ENCODE measurements at regions of chr7 and their contacts with region 1.

Region 1: GRCh38 chr7:116979430-116979829 is 26.1 kb downstream of the ST7 start:
- DNase-seq: no peak
- H3K4me3 ChIP-seq: no peak overlapping the region
- H3K27ac ChIP-seq: no peak overlapping the region
- H3K4me1 ChIP-seq: no peaks in the 10 kb centered on the region
- H3K27me3 ChIP-seq: no peaks in the 10 kb centered on the region
- CTCF ChIP-seq: no peak

Region 2: GRCh38 chr7:116122972-116123595 is 856.3 kb before region 1 on chr7:
- CTCF ChIA-PET with region 1: no interaction called
- dilution Hi-C with region 1: no loop called
- in situ Hi-C with region 1: no loop called
- intact Hi-C with region 1: no loop called
- DNase-seq: peak; percentile 24
- H3K4me3 ChIP-seq: no peak overlapping the region
- H3K27ac ChIP-seq: no peak overlapping the region
- H3K4me1 ChIP-seq: no peaks in the 10 kb centered on the region
- H3K27me3 ChIP-seq: no peaks in the 10 kb centered on the region
- CTCF ChIP-seq: peak; percentile 80 to 85

Region 3: DNA sequence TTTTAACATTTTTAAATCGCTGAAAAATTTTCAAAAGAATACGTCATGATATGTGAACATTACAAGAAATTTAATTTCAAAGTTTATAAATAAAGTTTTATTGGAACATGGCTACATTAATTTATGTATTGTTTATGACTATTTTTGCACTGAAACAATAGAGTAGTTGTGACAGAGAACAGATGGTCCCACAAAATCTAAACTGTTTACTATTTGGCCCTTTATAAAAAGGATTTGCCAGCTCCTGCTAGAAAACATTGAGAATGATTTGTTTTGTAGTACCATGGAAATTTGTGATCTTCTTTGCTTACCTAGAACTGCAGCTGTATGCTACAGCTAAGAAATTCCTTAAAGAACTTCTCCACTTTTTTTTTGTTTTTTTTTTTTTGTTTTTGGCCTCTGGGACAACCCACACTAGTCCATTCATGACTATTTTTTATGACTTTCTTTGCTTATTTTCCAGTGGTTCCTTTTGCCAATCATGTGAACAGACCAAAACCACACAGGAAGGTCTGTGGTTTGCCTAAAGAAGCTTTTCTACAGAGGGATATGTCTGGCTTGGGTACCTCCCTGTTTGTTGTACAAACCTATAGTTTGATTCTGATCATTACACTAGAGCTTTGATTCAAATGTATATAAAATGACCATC is 29.6 kb after region 1 on chr7:
- CTCF ChIA-PET with region 1: interaction called, 17 read pairs
- dilution Hi-C with region 1: no loop called
- in situ Hi-C with region 1: no loop called
- intact Hi-C with region 1: no loop called
- DNase-seq: peak; percentile 84
- H3K4me3 ChIP-seq: no peak overlapping the region
- H3K27ac ChIP-seq: no peak overlapping the region
- H3K4me1 ChIP-seq: peaks cover 27% of the 10 kb centered on the region
- H3K27me3 ChIP-seq: no peaks in the 10 kb centered on the region
- CTCF ChIP-seq: no peak

Region 4: DNA sequence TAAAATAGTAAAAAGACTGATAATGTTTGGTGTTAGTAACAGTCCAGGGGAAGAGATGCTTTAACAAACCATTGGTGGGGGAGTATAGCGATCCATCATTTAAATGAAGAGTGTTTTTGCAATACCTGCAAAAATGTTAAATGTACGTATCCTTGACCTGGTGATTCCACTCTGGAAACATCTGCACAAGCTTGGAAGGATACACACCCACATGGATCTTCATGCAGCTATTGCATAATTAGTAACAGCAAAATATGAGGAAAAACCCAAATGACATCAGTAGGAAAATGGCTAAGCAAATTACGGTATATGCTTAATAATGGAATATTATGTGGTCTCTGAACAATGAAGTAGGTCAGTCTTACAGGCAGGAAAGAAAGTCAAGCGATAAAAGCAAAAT is 323.0 kb after region 1 on chr7:
- CTCF ChIA-PET with region 1: no interaction called
- dilution Hi-C with region 1: no loop called
- in situ Hi-C with region 1: no loop called
- intact Hi-C with region 1: no loop called
- DNase-seq: no peak
- H3K4me3 ChIP-seq: no peak overlapping the region
- H3K27ac ChIP-seq: no peak overlapping the region
- H3K4me1 ChIP-seq: no peaks in the 10 kb centered on the region
- H3K27me3 ChIP-seq: peaks cover 3% of the 10 kb centered on the region
- CTCF ChIP-seq: no peak